K562 (cell line): ENCODE measurements at regions of chr19 and their contacts with region 1.

Region 1: DNA sequence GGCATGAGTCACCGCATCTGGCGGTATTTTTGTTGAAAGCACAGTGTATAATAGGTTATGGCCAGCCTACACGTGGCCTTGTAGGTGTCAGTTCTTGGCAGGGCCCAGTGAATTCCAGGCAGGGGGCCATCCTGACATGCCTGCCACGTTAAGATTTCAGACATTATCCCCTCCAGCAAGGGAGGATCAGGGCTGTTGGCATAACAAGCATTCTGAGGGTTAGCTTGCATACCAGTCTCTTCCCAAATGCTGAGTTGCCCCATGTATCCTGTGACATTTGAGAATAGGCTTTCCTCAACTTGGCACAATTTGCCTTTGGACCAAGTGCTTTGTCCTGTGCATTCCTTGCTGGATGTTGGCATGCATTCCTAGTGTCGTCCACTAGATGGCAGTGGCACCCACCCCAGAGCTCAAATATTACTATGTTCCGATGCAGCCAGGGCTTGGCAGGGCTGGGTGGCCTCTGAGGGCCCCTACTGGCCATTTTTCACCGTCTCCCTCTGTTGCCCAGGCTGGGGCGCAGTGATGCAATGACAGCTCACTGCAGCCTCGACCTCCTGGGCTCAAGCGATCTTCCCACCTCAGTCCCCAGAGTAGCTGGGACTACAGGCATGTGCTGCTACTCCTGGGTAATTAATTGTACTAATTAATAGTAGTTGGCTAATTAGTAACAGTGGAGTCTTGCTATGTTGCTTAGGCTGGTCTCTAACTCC is 31.2 kb downstream of the NLRP12 start:
- DNase-seq: peak; percentile 85 to 91 (median 88)
- ATAC-seq: peak; percentile 100
- H3K4me3 ChIP-seq: no peak overlapping the region
- H3K27ac ChIP-seq: no peak overlapping the region
- H3K4me1 ChIP-seq: peaks cover 0 to 2% of the 10 kb centered on the region in 2 experiments; a peak in 2 of 5 replicates
- H3K27me3 ChIP-seq: peaks cover 5 to 31% of the 10 kb centered on the region in 2 experiments; a peak in 3 of 5 replicates
- CTCF ChIP-seq: peak; percentile 99
- EP300 ChIP-seq: no peak
- POLR2A ChIP-seq: no peak
- RAD21 ChIP-seq: peak; percentile 70 to 91

Region 2: GRCh38 chr19:54029930-54030490 is 237.1 kb after region 1 on chr19:
- CTCF ChIA-PET with region 1: interaction called, 5 read pairs
- POLR2A ChIA-PET with region 1: no interaction called
- in situ Hi-C with region 1: no loop called
- intact Hi-C with region 1: loop called (anchors 5 kb)
- DNase-seq: peak; percentile 63 to 76 (median 64)
- ATAC-seq: peak; percentile 83
- H3K4me3 ChIP-seq: no peak overlapping the region
- H3K27ac ChIP-seq: no peak overlapping the region
- H3K4me1 ChIP-seq: peaks cover 3% of the 10 kb centered on the region in 2 experiments; a peak in 1 of 5 replicates
- H3K27me3 ChIP-seq: no peaks in the 10 kb centered on the region; a peak in 1 of 5 replicates
- CTCF ChIP-seq: peak; percentile 65 to 87 (median 81)
- EP300 ChIP-seq: no peak
- POLR2A ChIP-seq: no peak
- RAD21 ChIP-seq: peak in 1 of 2 experiments; percentile 72; a peak in 3 of 4 replicates